Heart right ventricle (tissue), 16 donors: ENCODE measurements at regions of chr7 and their contacts with region 1.

Region 1: DNA sequence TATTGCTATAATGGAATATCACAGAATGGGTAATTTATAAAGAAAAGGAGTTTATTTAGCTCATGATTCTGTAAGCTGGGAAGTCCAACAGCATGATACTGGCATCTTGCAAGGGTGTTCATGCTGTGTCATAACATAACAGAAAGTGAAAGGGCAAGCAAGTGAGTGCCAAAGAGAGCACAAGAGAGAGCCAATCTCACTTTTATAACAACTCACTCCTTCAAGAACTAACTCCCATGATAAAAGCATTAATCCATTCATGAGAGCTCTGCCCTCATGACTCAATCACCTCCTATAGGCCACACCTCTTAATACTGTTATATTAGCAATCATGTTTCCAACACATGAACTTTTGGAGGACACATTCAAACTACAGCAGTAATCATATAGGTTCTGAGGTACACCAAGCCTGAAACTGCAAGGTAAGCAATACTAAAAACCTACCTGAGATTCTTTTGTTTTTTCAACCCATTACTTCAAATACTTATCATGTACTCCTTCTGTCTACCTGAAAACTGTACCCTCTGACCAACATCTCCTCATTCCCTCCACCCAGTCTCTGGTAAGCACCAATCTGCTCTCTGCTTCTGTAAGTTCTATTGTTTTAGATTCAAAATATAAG is 219.7 kb downstream of the MTERF1 start:
- DNase-seq: no peak
- ATAC-seq: no peak
- H3K4me3 ChIP-seq: no peak overlapping the region
- H3K27ac ChIP-seq: no peak overlapping the region
- H3K4me1 ChIP-seq: no peaks in the 10 kb centered on the region
- H3K27me3 ChIP-seq: no peaks in the 10 kb centered on the region
- CTCF ChIP-seq: no peak

Region 2: GRCh38 chr7:91749418-91749817 is 88.6 kb after region 1 on chr7:
- intact Hi-C with region 1: loop called in 1 of 10 experiments (anchors 10 kb)
- DNase-seq: no peak
- ATAC-seq: no peak
- H3K4me3 ChIP-seq: no peak overlapping the region
- H3K27ac ChIP-seq: no peak overlapping the region
- H3K4me1 ChIP-seq: no peaks in the 10 kb centered on the region
- H3K27me3 ChIP-seq: no peaks in the 10 kb centered on the region
- CTCF ChIP-seq: no peak